Activated CD4-positive, alpha-beta memory T cell treated with anti-CD3 and anti-CD28 coated beads for 36 hours (primary cell): ENCODE measurements at regions of chr17 and their contacts with region 1.

Region 1: GRCh38 chr17:38351412-38352222 is at the start of gene SOCS7:
- DNase-seq: peak; percentile 93
- H3K4me3 Mint-ChIP-seq: peak within 1 kb of the TSS; percentile 94
- H3K27ac Mint-ChIP-seq: peak within 1 kb of the TSS; percentile 90
- H3K4me1 Mint-ChIP-seq: peaks cover 50% of the 10 kb centered on the region
- H3K27me3 Mint-ChIP-seq: no peaks in the 10 kb centered on the region
- total RNA-seq, gene SOCS7: 18.1 to 21.7 TPM

Region 2: GRCh38 chr17:38333635-38334295 is 17.9 kb before region 1 on chr17:
- CTCF ChIA-PET with region 1: interaction called, 28 read pairs
- POLR2A ChIA-PET with region 1: no interaction called
- intact Hi-C with region 1: no loop called
- DNase-seq: peak; percentile 72
- H3K4me3 Mint-ChIP-seq: no peak overlapping the region
- H3K27ac Mint-ChIP-seq: no peak overlapping the region
- H3K4me1 Mint-ChIP-seq: no peaks in the 10 kb centered on the region
- H3K27me3 Mint-ChIP-seq: peaks cover 7% of the 10 kb centered on the region

Region 3: GRCh38 chr17:38402897-38403296 is 51.3 kb after region 1 on chr17:
- CTCF ChIA-PET with region 1: interaction called, 12 read pairs
- POLR2A ChIA-PET with region 1: interaction called, 3 read pairs
- intact Hi-C with region 1: no loop called
- DNase-seq: no peak
- H3K4me3 Mint-ChIP-seq: no peak overlapping the region
- H3K27ac Mint-ChIP-seq: no peak overlapping the region
- H3K4me1 Mint-ChIP-seq: no peaks in the 10 kb centered on the region
- H3K27me3 Mint-ChIP-seq: no peaks in the 10 kb centered on the region

Region 4: DNA sequence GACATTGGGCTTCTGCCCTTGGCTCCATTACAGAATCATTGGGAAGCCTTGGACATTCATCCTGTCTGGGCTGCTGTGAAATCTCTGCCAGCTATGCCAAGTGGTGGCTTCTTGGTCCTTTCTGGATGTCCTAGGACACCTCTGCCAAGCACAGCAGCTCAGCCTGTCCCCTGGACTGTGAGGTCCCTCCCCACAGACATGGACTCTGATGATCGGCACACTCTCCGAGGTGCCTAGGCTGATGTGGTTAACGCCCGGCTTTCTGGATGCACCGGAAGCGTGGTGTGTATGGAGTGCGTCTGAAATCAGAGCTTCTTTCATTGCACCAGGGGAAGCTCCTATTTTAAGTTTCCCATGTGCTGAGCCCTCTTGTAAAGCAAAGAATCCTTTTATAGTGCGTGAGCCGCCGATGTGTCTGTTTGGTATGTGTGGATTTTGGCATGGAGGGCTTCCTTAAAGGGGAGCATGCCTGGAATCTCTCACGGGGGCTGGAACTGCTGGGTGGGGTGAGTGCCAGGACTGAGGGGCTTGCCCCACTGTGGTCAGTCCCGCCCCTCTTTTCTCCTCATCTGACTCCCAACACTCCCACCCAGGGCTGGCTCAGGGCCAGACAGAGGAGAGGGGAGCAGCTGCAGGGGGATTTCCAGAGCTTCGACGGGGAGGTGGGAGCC is 69.7 kb after region 1 on chr17:
- CTCF ChIA-PET with region 1: interaction called, 265 read pairs
- POLR2A ChIA-PET with region 1: no interaction called
- intact Hi-C with region 1: no loop called
- DNase-seq: no peak
- H3K4me3 Mint-ChIP-seq: no peak overlapping the region
- H3K27ac Mint-ChIP-seq: no peak overlapping the region
- H3K4me1 Mint-ChIP-seq: peaks cover 6% of the 10 kb centered on the region
- H3K27me3 Mint-ChIP-seq: peaks cover 58% of the 10 kb centered on the region

Region 5: GRCh38 chr17:38656959-38657823 is 305.6 kb after region 1 on chr17:
- CTCF ChIA-PET with region 1: no interaction called
- POLR2A ChIA-PET with region 1: no interaction called
- intact Hi-C with region 1: no loop called
- DNase-seq: no peak
- H3K4me3 Mint-ChIP-seq: no peak overlapping the region
- H3K27ac Mint-ChIP-seq: no peak overlapping the region
- H3K4me1 Mint-ChIP-seq: peaks cover 11% of the 10 kb centered on the region
- H3K27me3 Mint-ChIP-seq: peaks cover 11% of the 10 kb centered on the region